ENCODE measurements at regions of chr5 and their contacts with region 1.

Region 1: DNA sequence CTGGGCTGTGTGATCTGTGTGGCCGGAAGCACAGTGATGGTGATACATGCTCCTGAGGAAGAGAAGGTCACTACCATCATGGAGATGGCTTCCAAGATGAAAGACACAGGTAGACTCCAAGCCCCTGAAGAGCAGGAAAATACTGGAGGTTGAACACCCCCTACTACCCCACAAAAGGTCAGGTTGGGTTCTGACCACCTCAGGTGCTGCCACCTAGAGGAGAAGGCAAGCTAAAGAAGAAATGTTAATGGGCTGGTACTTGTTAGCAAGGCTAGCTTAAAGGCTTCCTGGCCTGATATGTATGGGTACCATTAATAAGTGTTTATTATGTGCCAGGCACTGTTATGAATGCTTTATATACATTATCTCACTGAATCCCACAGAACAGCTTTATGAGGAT is 11.7 kb downstream of the NIPAL4 start:
- DNase-seq: no peak
- H3K4me3 ChIP-seq: no peak overlapping the region
- H3K27ac ChIP-seq: no peak overlapping the region
- H3K27me3 ChIP-seq: no peaks in the 10 kb centered on the region
- CTCF ChIP-seq: peak; percentile 68

Region 2: DNA sequence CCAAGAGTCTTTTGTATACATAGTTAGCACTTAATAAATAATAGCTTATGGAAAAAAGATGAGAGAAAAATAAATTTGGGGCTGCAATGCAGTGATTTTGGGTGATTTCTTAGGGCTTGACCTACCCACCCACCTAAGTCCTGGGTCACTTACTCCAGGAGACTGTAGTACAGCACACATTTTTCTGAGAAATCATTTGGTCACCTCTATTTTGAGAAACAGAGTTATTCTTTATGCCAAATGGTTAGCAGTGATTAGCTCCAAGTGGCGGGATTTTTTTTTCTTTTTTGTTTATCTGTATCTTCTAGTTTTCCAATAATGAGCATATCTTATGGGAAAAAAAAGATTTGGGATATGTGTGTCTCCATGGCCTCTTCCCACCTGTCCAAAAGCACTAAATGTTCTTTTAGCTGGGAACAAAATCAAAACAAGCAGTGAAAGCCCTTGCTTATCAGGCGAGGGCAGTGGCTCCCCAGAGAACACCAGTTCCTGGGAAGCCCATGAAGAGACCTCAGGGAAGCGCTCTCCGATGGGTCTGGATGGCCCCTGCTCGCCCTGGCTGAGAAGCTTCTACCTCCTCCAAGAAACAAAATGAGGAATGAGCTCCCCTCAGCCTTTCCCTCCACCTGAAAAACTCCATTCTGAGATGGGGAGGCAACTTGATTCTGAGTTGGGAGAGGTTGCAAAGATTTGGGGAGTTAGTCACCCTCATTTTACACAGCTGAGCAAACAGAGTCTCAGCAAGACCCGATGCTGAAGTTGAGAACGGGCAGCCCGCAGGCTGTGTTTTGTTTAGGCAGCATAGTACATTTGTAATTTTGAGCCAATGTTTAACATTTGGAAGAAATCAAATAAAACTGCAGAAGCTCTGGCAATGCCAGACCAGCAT is 135.9 kb before region 1 on chr5:
- CTCF ChIA-PET with region 1: interaction called, 53 read pairs
- POLR2A ChIA-PET with region 1: no interaction called
- DNase-seq: peak; percentile 44
- H3K4me3 ChIP-seq: no peak overlapping the region
- H3K27ac ChIP-seq: no peak overlapping the region
- H3K27me3 ChIP-seq: no peaks in the 10 kb centered on the region
- CTCF ChIP-seq: no peak

Region 3: DNA sequence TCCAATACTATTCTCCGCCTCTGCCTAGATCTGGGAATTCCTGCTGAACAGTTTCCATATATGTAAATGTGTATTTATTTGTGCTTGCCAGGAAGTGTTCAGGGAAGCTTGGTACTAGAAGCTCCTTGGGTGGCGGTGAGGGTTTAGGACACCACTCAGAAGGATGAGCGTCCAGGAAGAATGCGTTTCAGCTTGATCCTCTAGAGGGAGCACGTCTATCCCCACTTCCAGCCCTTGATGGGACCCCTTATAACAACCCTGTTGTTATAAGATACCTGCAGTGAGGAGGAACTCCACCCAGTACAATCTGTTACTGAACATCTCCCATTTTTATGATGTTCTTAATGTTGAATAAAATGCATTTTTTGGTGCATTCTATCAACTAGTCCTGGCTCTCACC is 116.9 kb before region 1 on chr5:
- CTCF ChIA-PET with region 1: interaction called, 12 read pairs
- POLR2A ChIA-PET with region 1: no interaction called
- DNase-seq: no peak
- H3K4me3 ChIP-seq: no peak overlapping the region
- H3K27ac ChIP-seq: no peak overlapping the region
- H3K27me3 ChIP-seq: no peaks in the 10 kb centered on the region
- CTCF ChIP-seq: peak; percentile 41

Region 4: DNA sequence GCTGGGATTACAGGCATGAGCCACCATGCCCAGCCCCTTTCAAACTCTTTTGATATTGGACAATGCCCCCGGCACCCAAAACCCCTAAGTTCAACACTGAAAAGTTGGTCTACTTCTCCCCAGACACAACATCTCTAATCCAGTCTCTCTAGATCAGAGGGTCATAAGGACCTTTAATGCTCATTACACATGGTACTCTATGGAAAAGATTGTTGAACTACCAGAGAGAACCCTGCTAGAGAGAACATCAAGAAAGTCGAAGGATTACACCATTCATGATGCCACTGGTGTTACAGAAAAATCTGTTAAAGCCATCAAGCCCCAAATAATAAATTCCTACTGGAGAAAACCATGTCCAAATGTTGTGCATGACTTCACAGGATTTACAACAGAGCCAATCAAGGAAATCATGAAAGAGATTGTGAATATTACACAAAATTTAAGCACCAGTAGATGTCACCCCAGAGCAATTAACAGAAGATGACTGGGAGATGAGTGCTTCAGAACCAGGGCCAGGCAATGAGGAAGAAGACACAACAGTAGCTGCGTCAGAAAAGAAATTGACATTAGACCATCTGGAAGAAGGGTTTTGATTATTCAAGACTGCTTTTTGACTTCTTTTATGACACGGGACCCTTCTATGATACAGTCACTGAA is 40.0 kb before region 1 on chr5:
- CTCF ChIA-PET with region 1: interaction called, 42 read pairs
- POLR2A ChIA-PET with region 1: no interaction called
- DNase-seq: peak; percentile 24
- H3K4me3 ChIP-seq: no peak overlapping the region
- H3K27ac ChIP-seq: no peak overlapping the region
- H3K27me3 ChIP-seq: no peaks in the 10 kb centered on the region
- CTCF ChIP-seq: peak; percentile 57

Region 5: DNA sequence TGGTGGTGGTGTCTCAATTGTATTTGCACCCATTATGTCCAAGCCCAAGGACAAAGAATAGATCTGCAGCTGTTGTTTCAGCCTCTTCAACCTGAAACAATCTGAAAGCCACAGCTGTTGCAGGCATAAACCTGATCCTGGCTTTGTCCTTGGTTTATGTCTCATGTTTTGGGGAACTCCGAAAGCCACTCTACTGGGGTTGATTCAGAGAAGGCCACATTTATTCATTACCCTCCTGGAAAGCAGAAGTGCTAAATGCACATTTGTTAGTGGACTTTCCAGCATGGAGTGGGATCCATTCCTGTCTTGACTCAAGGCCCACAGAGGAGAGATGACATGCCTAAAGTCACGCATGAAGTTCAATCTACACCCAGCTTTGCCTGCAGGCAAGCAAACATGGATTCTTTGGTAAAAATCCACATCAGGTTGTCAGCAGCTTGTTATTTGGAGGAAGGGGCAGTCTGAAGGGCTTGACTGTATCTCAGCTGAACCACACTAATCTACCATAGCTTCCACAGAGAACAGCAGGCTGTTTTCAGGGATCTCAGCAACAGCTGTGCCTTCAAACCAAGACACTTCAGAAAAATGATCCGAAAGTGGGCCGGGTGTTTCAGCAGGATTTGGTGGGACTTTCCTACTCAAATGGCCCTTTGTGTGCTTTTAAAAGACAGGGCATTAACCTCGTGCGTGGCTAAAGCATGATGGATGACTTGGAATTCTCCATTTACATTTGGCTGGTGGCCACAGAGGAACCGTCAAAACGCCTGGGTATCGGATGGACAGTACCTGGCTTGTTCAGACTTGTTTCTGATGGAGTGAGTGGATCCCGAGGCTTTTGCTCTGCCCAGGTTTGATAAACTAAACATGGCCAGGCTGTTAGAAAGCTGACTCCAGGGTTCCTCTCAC is 140.1 kb after region 1 on chr5:
- CTCF ChIA-PET with region 1: no interaction called
- POLR2A ChIA-PET with region 1: no interaction called
- DNase-seq: no peak
- H3K4me3 ChIP-seq: no peak overlapping the region
- H3K27ac ChIP-seq: peak overlapping the region; percentile 34
- H3K27me3 ChIP-seq: no peaks in the 10 kb centered on the region
- CTCF ChIP-seq: no peak

Region 6: GRCh38 chr5:157750320-157750719 is 278.6 kb after region 1 on chr5:
- CTCF ChIA-PET with region 1: no interaction called
- POLR2A ChIA-PET with region 1: no interaction called
- DNase-seq: no peak
- H3K4me3 ChIP-seq: no peak overlapping the region
- H3K27ac ChIP-seq: peak overlapping the region; percentile 52
- H3K27me3 ChIP-seq: no peaks in the 10 kb centered on the region
- CTCF ChIP-seq: no peak

Region 7: DNA sequence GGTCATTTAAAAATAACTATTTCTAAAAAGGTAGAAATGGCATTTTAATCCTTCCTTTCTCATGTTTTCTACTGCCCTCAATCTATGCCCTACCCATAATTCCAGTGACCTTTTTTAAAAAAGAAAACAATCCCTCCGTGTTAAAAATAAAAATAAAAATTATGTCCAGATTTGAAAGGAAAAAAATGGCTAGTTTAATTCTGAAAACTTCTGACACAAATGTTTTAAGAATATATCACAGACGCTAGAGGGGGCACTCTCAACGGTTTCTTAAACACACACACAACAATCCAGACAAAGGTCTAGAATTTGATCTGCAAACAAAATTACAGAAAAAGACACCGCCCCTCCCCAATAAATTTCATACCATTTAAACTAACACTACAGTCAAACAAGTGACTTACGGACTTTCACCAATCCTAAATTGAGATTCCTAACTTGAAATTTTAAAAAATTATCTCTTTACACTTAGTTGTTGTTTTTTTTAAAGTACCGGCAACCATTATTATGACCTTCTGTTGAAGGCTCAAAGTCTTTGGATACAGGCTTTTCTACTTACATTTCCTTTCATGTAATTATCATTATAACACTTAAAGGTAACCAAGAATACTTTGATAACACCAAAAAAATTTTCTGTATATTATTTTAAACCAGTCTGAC is 349.0 kb after region 1 on chr5:
- CTCF ChIA-PET with region 1: no interaction called
- POLR2A ChIA-PET with region 1: no interaction called
- DNase-seq: peak; percentile 6
- H3K4me3 ChIP-seq: no peak overlapping the region
- H3K27ac ChIP-seq: no peak overlapping the region
- H3K27me3 ChIP-seq: no peaks in the 10 kb centered on the region
- CTCF ChIP-seq: peak; percentile 68

Region 8: GRCh38 chr5:157845894-157846598 is 374.3 kb after region 1 on chr5:
- CTCF ChIA-PET with region 1: no interaction called
- POLR2A ChIA-PET with region 1: no interaction called
- DNase-seq: no peak
- H3K4me3 ChIP-seq: no peak overlapping the region
- H3K27ac ChIP-seq: no peak overlapping the region
- H3K27me3 ChIP-seq: no peaks in the 10 kb centered on the region
- CTCF ChIP-seq: no peak

Measured in AG04450 (cell line).